Endothelial cell of umbilical vein (primary cell): ENCODE measurements at regions of chr22 and their contacts with region 1.

Region 1: DNA sequence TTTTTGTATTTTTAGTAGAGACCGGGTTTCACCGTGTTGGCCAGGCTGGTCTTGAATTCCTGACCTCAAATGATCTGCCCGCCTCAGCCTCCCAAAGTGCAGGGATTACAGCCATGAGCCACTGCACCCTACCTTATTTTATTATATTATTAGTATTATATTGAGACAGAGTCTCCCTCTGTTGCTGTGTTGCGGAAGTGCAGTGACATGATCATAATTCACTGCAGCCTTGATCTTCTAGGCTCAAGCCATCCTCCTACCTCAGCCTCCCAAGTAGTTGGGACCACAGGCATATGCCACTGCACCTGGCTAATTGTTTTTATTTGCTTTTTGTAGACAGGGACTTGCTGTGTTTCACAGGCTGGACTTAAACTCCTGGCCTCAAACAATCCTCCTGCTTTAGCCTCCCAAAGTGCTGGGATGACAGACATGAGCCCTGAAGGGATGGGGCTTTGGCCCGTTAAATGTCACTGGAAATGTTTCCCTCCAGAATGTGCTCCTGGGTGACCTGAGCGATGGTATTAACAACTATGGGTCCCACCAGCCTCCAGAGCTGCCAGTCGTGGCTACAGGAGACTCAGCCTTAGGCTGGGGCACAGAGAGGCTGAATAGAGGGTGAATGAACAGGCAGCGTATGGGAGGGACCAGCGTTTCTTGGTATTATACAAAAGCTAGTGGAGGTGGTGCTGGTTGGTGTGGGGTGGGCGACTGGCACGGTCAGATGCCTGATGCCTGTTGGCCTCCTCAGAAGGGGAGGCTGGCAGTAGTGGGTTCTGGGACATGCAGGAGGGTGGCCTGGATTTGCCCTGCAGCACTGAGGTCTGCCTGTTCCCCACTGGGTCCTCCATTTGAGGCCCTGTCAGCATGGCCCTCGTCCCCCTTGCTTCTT is 7.3 kb downstream of the TANGO2 start:
- DNase-seq: peak; percentile 40
- H3K4me3 ChIP-seq: no peak overlapping the region
- H3K27ac ChIP-seq: no peak overlapping the region
- H3K4me1 ChIP-seq: no peaks in the 10 kb centered on the region
- H3K27me3 ChIP-seq: no peaks in the 10 kb centered on the region
- CTCF ChIP-seq: peak; percentile 31 to 39
- POLR2A ChIP-seq: no peak

Region 2: GRCh38 chr22:19909350-19910179 is 118.6 kb before region 1 on chr22:
- CTCF ChIA-PET with region 1: no interaction called
- POLR2A ChIA-PET with region 1: no interaction called
- dilution Hi-C with region 1: no loop called
- intact Hi-C with region 1: no loop called
- DNase-seq: peak; percentile 77
- H3K4me3 ChIP-seq: no peak overlapping the region
- H3K27ac ChIP-seq: no peak overlapping the region
- H3K4me1 ChIP-seq: peaks cover 3% of the 10 kb centered on the region
- H3K27me3 ChIP-seq: no peaks in the 10 kb centered on the region
- CTCF ChIP-seq: peak; percentile 86 to 88
- POLR2A ChIP-seq: no peak

Region 3: DNA sequence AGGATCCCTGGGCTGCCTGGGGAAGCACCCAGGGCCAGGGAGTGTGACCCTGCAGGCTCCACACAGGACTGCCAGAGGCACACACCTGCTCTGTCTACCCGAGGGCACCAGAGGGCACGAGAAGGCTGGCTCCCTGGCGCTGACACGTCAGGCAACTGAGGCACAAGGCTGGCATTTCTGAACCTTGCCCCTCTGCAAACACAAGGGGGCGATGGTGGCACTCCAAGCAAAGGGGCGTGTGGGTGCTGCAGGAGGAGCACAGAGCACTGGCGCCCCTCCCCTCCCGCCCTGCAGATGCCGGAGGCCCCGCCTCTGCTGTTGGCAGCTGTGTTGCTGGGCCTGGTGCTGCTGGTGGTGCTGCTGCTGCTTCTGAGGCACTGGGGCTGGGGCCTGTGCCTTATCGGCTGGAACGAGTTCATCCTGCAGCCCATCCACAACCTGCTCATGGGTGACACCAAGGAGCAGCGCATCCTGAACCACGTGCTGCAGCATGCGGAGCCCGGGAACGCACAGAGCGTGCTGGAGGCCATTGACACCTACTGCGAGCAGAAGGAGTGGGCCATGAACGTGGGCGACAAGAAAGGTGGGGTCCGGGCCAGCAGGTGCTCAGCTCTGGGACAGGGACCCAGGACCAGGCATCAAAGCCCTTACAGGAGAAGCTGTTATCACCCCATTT is 65.8 kb before region 1 on chr22:
- CTCF ChIA-PET with region 1: no interaction called
- POLR2A ChIA-PET with region 1: no interaction called
- dilution Hi-C with region 1: no loop called
- intact Hi-C with region 1: loop called (anchors 1 kb)
- DNase-seq: peak; percentile 75
- H3K4me3 ChIP-seq: no peak overlapping the region
- H3K27ac ChIP-seq: peak overlapping the region; percentile 4
- H3K4me1 ChIP-seq: peaks cover 28% of the 10 kb centered on the region
- H3K27me3 ChIP-seq: no peaks in the 10 kb centered on the region
- CTCF ChIP-seq: peak; percentile 54 to 83
- POLR2A ChIP-seq: no peak